Common myeloid progenitor, CD34-positive (primary cell): ENCODE measurements at regions of chr6 and their contacts with region 1.

Region 1: DNA sequence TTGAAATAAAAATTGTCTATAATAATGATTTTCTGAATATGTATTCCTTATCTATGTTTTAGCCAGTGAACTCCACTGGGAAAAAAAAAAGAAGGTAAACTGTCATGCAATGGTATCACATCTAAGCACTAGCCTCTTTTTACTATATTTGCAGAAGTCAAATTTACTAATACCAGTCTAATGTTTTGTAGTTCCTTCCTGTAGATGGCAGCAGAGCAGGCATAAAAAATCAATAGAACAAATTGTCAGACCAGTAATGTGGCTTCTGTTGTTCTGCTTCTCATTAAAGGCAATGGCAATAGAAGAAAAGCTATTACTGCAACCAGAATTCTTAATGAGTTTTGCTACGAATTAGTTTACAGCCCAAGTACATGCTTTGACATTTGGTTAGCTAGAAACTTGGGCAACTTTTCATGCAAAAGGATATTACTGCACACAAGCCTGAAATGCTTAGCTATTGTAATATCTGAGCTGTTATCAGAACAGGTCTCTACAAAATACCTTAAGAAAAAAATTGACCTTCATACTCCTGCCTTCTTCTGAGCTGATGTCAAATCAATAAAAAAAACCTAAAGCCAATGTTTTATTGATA is 476.9 kb downstream of the KHDRBS2 start:
- DNase-seq: peak; percentile 43 to 77 (median 69)
- H3K4me3 ChIP-seq: no peak overlapping the region
- H3K27ac ChIP-seq: no peak overlapping the region
- H3K4me1 ChIP-seq: no peaks in the 10 kb centered on the region
- H3K27me3 ChIP-seq: no peaks in the 10 kb centered on the region

Region 2: DNA sequence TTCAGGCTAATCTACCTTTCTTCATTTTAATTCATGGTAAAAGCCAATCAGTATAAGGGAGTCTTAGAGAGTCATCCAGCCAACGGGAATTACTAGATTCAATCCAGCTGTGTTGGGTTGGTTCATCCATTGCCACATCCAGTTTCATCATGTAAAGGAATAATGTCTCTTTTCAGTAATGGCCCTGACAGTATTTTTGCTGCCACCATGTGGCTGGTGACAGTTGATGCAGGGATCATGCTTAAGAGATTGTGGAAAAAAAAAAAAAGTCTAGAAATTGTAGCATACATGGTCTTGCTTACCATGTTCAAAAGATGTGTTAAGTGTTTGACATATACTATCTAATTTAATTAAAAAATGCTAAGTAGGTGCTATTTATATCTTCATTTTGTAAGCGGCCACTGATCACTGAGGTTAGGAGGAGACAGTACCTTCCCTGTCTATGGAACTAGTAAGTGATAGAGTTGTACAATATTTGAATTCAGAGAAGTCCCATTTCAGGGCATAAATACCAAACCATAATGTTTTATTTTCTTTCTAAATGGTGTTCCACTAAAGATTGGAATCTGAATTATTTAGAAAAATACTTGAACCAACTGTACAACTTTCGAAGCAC is 341.1 kb after region 1 on chr6:
- CTCF ChIA-PET with region 1: interaction called, 15 read pairs
- POLR2A ChIA-PET with region 1: no interaction called
- DNase-seq: peak; percentile 38 to 68 (median 59)
- H3K4me3 ChIP-seq: no peak overlapping the region
- H3K27ac ChIP-seq: no peak overlapping the region
- H3K4me1 ChIP-seq: no peaks in the 10 kb centered on the region
- H3K27me3 ChIP-seq: no peaks in the 10 kb centered on the region

Region 3: DNA sequence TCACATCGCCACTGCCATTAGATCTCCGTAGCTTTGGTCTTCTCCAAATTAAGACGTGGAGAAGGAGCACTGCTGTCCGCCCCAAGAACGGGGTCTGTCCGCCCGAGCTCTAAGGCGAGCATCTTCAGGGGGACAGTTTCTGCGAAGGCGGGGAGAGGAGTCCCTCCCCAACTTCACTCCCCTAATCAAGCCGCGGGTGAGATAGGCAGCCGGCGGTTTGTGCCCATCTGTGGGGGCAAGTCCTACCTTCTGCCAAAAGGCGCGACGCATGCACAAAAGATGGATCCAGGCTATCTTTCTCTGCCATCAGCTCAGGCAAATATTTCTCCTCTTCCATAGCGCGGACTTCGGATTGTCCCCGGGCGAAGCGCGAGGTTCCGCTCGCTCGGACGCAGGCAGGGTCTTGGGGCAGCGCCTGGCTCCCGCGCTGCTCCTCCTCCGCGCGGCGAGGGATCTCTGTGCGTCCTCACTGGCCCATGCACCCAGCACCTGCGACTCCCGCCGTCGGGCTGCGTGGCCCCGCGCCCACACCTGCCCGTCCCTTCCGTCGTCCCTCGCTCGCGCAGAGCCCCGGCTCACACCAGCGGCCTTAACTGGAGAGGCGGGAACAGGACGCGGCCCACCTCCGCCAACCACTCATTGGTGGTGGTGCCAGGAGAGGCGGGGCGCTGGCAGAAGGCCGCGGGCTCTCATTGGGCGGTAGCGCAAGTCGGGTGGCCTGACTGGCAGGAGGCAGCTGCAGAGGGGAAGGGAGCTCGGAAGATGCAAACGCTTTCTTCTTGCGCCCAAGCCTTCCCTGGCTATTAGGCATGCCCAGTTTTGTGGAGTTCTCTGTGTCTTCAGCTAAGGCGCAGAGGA is 476.7 kb after region 1 on chr6 and contains the start of gene KHDRBS2:
- CTCF ChIA-PET with region 1: interaction called, 11 read pairs
- POLR2A ChIA-PET with region 1: no interaction called
- DNase-seq: peak; percentile 90 to 94 (median 94)
- H3K4me3 ChIP-seq: peak within 1 kb of the TSS; percentile 56 to 89 (median 81)
- H3K27ac ChIP-seq: no peak within 1 kb of the TSS
- H3K4me1 ChIP-seq: peaks cover 3 to 15% (median 13%) of the 10 kb centered on the region in 4 experiments
- H3K27me3 ChIP-seq: no peaks in the 10 kb centered on the region